ENCODE measurements at regions of chr2 and their contacts with region 1.

Region 1: GRCh38 chr2:227238238-227239237 is 74.1 kb downstream of the COL4A3 start:
- DNase-seq: peak in 2 of 3 donors; percentile 62 to 74
- ATAC-seq: peak; percentile 76 to 84 (median 82)
- H3K4me3 ChIP-seq: no peak overlapping the region
- H3K27ac ChIP-seq: no peak overlapping the region
- H3K4me1 ChIP-seq: no peaks in the 10 kb centered on the region
- H3K27me3 ChIP-seq: no peaks in the 10 kb centered on the region
- CTCF ChIP-seq: peak; percentile 88 to 98 (median 96)
- POLR2A ChIP-seq: no peak

Region 2: GRCh38 chr2:227132986-227133385 is 105.6 kb before region 1 on chr2:
- intact Hi-C with region 1: loop called (anchors 5 kb)
- DNase-seq: peak; percentile 56 to 87 (median 82)
- ATAC-seq: peak; percentile 95 to 98 (median 96)
- H3K4me3 ChIP-seq: no peak overlapping the region
- H3K27ac ChIP-seq: no peak overlapping the region
- H3K4me1 ChIP-seq: peaks cover 0 to 9% (median 0%) of the 10 kb centered on the region in 4 donors
- H3K27me3 ChIP-seq: no peaks in the 10 kb centered on the region
- CTCF ChIP-seq: no peak
- POLR2A ChIP-seq: no peak